HEK293T (cell line): ENCODE measurements at regions of chr10 and their contacts with region 1.

Region 1: DNA sequence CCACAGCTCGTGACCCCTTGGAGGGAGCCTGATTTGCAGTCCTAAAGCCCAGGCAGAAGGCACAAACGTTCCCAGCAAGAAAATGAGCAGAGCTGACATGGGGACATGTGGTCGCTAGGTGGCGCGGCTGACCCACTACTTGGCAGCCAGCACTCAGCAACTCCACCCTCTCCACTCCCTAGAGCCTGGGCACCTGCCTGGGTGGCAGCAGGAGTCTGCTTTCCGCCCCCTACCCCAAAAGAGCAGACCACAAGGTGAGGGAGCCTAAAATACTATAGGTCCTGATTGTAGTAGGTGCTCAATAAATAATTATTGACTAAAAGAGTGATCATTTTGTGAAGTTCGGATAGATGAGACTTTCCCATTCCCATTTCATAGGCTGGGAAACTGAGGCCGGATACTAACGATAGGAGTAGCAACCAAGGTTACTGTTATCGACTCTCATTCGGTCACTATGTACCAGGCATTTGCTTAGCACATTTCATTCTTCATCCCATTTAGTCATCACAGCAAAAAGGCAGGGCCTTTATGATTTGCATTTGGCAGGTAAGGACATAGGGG is 57.4 kb downstream of the NEUROG3 start:
- DNase-seq: peak; percentile 85

Region 2: GRCh38 chr10:69639291-69640195 is 123.8 kb after region 1 on chr10:
- CTCF ChIA-PET with region 1: interaction called, 57 read pairs
- POLR2A ChIA-PET with region 1: interaction called, 3 read pairs
- DNase-seq: peak; percentile 70